ENCODE measurements at regions of chr15 and their contacts with region 1.

Region 1: GRCh38 chr15:51776952-51777574 is 25.7 kb downstream of the TMOD2 start:
- DNase-seq: peak; percentile 82
- H3K4me3 ChIP-seq: no peak overlapping the region
- H3K27ac ChIP-seq: no peak overlapping the region
- H3K4me1 ChIP-seq: no peaks in the 10 kb centered on the region
- H3K27me3 ChIP-seq: no peaks in the 10 kb centered on the region
- CTCF ChIP-seq: peak; percentile 87

Region 2: GRCh38 chr15:51375726-51376640 is 401.1 kb before region 1 on chr15:
- CTCF ChIA-PET with region 1: interaction called, 10 read pairs
- POLR2A ChIA-PET with region 1: no interaction called
- intact Hi-C with region 1: no loop called
- DNase-seq: no peak
- H3K4me3 ChIP-seq: no peak overlapping the region
- H3K27ac ChIP-seq: no peak overlapping the region
- H3K4me1 ChIP-seq: no peaks in the 10 kb centered on the region
- H3K27me3 ChIP-seq: no peaks in the 10 kb centered on the region
- CTCF ChIP-seq: no peak

Region 3: GRCh38 chr15:51450001-51450400 is 327.1 kb before region 1 on chr15:
- CTCF ChIA-PET with region 1: no interaction called
- POLR2A ChIA-PET with region 1: no interaction called
- intact Hi-C with region 1: no loop called
- DNase-seq: no peak
- H3K4me3 ChIP-seq: no peak overlapping the region
- H3K27ac ChIP-seq: no peak overlapping the region
- H3K4me1 ChIP-seq: peaks cover 5% of the 10 kb centered on the region
- H3K27me3 ChIP-seq: no peaks in the 10 kb centered on the region
- CTCF ChIP-seq: no peak

Region 4: GRCh38 chr15:51561271-51561670 is 215.8 kb before region 1 on chr15:
- CTCF ChIA-PET with region 1: no interaction called
- POLR2A ChIA-PET with region 1: no interaction called
- intact Hi-C with region 1: no loop called
- DNase-seq: no peak
- H3K4me3 ChIP-seq: no peak overlapping the region
- H3K27ac ChIP-seq: no peak overlapping the region
- H3K4me1 ChIP-seq: no peaks in the 10 kb centered on the region
- H3K27me3 ChIP-seq: no peaks in the 10 kb centered on the region
- CTCF ChIP-seq: no peak

Region 5: DNA sequence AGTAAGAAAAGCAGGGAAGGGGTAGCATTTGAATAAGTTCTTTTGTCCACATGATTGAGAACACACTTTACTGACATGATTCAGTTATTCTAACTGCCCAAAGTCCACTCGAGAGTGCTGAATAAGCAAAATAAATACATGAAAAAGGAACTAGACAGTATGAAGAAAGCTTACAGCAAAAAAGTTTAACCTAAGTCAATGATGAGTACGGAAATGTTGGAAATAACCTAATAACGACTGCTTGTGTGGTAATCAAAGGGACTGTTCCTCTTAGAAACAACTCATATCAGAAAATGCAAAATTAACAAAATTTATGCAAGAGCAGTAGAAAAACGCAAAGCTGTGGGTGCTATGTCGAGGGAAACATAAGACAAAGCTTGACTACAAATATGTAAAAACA is 191.1 kb before region 1 on chr15:
- CTCF ChIA-PET with region 1: no interaction called
- POLR2A ChIA-PET with region 1: no interaction called
- intact Hi-C with region 1: no loop called
- DNase-seq: no peak
- H3K4me3 ChIP-seq: no peak overlapping the region
- H3K27ac ChIP-seq: no peak overlapping the region
- H3K4me1 ChIP-seq: no peaks in the 10 kb centered on the region
- H3K27me3 ChIP-seq: no peaks in the 10 kb centered on the region
- CTCF ChIP-seq: no peak

Region 6: DNA sequence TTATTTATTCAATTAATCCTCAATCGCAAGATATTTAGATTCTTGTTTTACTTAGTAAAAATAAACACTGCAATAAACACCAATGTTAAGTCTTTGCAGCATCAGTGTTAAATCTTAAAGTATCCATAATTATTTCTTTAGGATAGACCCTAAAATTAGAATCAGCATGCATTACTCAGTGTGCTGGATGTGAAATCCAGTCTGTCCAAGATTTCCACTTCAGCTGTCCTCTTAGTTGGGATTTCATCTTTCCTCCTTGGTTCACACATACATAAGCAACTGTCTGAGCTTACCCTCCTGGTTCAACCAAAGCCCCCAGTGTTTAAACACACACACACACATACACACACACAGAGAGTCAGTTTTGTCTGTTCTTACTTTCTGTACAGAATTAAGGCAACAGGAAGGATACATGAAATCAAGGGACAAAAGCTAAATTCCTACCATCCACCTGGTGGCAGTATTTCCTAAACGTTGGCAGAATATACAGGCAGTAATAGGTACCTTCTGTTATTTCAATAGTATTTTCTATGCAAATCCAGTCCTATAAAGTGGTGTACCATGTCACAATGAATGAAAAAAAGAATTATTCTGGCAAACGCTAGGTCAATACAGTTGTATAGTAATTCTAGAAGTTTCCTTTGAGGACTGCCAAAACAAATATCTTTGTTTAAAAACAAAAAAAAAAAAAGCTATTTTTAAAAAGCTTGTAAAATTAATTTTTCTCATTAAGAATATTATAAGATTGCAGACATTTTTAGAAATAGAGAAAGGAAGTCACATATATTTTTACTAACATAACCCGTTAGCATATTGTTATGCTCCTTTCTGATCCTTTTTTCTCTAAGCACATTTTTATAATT is 127.2 kb before region 1 on chr15:
- CTCF ChIA-PET with region 1: interaction called, 111 read pairs
- POLR2A ChIA-PET with region 1: no interaction called
- intact Hi-C with region 1: loop called (anchors 1 kb)
- DNase-seq: peak; percentile 77
- H3K4me3 ChIP-seq: no peak overlapping the region
- H3K27ac ChIP-seq: no peak overlapping the region
- H3K4me1 ChIP-seq: no peaks in the 10 kb centered on the region
- H3K27me3 ChIP-seq: no peaks in the 10 kb centered on the region
- CTCF ChIP-seq: peak; percentile 77

Region 7: GRCh38 chr15:51907136-51907914 is 130.3 kb after region 1 on chr15:
- CTCF ChIA-PET with region 1: interaction called, 12 read pairs
- POLR2A ChIA-PET with region 1: no interaction called
- intact Hi-C with region 1: loop called (anchors 5 kb)
- DNase-seq: no peak
- H3K4me3 ChIP-seq: no peak overlapping the region
- H3K27ac ChIP-seq: no peak overlapping the region
- H3K4me1 ChIP-seq: no peaks in the 10 kb centered on the region
- H3K27me3 ChIP-seq: no peaks in the 10 kb centered on the region
- CTCF ChIP-seq: no peak

Region 8: GRCh38 chr15:53549697-53550305 is 1772.7 kb after region 1 on chr15:
- CTCF ChIA-PET with region 1: no interaction called
- POLR2A ChIA-PET with region 1: no interaction called
- intact Hi-C with region 1: no loop called
- DNase-seq: no peak
- H3K4me3 ChIP-seq: no peak overlapping the region
- H3K27ac ChIP-seq: no peak overlapping the region
- H3K4me1 ChIP-seq: no peaks in the 10 kb centered on the region
- H3K27me3 ChIP-seq: no peaks in the 10 kb centered on the region
- CTCF ChIP-seq: no peak

Measured in A673 (cell line).